ENCODE measurements at regions of chr12 and their contacts with region 1.

Region 1: DNA sequence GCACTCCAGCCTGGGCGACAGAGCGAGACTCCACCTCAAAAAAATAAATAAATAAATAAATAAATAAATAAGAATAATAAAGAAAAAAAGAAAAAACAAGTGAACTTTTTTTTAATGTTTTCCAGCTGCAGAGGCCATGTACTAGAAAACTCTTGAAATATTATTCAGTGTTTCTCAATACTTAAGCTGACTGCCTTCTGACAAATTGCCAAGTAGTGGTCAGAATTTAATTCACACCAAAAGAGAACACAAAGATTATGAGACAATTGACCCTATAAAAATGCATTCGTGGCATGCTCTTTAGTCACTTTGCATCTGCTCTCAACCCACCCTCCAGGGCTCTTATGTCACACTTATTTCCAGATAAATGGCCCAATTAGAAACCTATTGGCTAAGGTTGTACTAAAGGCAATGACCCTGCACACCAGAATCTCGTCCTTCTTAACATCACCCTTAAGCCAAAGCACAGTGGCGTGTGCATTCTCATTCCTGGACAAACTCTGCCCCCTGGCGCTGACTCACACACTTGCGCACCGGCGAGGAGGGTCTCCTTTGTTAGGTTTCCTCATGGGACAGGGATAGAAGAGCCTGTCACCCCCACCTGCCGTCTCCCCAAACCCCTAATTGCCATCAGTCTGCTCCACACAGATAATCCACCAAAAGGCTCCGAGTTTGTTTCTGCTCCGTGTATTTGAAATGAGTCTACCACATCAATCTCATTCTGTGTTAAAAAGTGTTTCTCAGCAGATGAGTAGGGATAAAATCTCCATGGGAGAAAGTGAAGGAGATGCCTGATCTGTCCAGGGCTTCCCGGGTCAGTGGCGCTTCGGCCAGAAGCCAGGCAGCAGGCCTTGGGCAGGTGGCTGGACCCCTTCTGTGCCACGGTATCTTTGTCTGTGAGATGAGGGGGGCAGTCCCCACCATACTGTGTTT is 73.1 kb upstream of the CEP83 start:
- DNase-seq: peak; percentile 56
- ATAC-seq: peak; percentile 95
- H3K4me3 ChIP-seq: no peak overlapping the region
- H3K27ac ChIP-seq: no peak overlapping the region
- H3K4me1 ChIP-seq: no peaks in the 10 kb centered on the region
- H3K27me3 ChIP-seq: peaks cover 20% of the 10 kb centered on the region
- CTCF ChIP-seq: peak; percentile 81
- POLR2A ChIP-seq: no peak
- RAD21 ChIP-seq: peak; percentile 93

Region 2: DNA sequence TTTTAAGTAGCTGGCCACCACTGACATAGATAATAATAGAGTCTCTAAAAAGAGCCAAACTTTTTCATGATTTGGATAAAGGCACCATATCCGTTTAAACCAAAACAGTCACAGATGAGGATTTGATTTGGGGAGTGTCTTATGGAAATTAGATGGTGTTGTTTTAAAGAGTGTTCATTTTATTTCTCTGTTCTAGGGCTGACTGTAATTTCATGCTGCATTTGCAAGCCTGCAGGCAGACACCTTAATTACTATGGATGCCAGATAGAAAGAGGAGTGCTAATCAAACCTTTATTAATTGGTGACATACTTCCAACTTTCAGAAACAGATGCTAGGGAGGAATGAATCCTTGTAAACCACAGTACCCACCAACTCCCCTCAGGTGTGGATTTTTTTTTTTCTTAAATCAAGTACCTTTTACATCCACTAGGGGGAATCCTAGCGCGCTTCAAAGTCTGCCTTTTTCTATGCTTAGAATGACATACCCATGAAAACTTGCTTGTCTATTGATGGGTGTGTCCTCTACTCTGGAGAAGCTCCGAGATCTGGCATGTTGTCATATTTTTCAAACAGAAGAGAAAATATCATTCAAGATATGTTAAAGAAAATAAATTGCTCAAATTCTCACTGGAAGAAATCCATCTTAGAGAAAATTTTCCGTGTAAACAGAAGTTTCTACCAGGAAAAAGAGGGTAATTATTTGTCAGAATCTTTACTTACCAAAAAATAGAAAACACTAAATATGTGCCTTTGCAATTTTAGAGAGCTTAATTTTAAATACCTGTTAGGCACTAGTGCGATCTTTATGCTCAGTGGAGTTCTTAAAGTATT is 398.6 kb before region 1 on chr12:
- CTCF ChIA-PET with region 1: interaction called, 6 read pairs
- POLR2A ChIA-PET with region 1: no interaction called
- dilution Hi-C with region 1: loop called (anchors 25 kb)
- in situ Hi-C with region 1: no loop called
- intact Hi-C with region 1: loop called (anchors 1 kb)
- DNase-seq: peak; percentile 62
- ATAC-seq: peak; percentile 87
- H3K4me3 ChIP-seq: no peak overlapping the region
- H3K27ac ChIP-seq: no peak overlapping the region
- H3K4me1 ChIP-seq: no peaks in the 10 kb centered on the region
- H3K27me3 ChIP-seq: peaks cover 20% of the 10 kb centered on the region
- CTCF ChIP-seq: peak; percentile 78
- POLR2A ChIP-seq: no peak
- RAD21 ChIP-seq: peak; percentile 81

Region 3: DNA sequence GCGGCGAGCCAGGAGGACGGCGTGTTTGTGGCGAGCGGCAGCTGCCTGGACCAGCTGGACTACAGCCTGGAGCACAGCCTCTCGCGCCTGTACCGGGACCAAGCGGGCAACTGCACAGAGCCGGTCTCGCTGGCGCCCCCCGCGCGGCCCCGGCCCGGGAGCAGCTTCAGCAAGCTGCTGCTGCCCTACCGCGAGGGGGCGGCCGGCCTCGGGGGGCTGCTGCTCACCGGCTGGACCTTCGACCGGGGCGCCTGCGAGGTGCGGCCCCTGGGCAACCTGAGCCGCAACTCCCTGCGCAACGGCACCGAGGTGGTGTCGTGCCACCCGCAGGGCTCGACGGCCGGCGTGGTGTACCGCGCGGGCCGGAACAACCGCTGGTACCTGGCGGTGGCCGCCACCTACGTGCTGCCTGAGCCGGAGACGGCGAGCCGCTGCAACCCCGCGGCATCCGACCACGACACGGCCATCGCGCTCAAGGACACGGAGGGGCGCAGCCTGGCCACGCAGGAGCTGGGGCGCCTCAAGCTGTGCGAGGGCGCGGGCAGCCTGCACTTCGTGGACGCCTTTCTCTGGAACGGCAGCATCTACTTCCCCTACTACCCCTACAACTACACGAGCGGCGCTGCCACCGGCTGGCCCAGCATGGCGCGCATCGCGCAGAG is 383.5 kb before region 1 on chr12:
- CTCF ChIA-PET with region 1: interaction called, 4 read pairs
- POLR2A ChIA-PET with region 1: no interaction called
- dilution Hi-C with region 1: loop called (anchors 25 kb)
- in situ Hi-C with region 1: loop called (anchors 5 kb)
- intact Hi-C with region 1: loop called (anchors 1 kb)
- DNase-seq: peak; percentile 23
- ATAC-seq: peak; percentile 64
- H3K4me3 ChIP-seq: peak overlapping the region; percentile 67
- H3K27ac ChIP-seq: no peak overlapping the region
- H3K4me1 ChIP-seq: no peaks in the 10 kb centered on the region; the same call in none of the 2 replicates
- H3K27me3 ChIP-seq: peaks cover 88% of the 10 kb centered on the region
- CTCF ChIP-seq: 0 out of 2 replicates have a peak, but pooled peaks have one; percentile 18
- POLR2A ChIP-seq: no peak
- RAD21 ChIP-seq: no peak

Region 4: DNA sequence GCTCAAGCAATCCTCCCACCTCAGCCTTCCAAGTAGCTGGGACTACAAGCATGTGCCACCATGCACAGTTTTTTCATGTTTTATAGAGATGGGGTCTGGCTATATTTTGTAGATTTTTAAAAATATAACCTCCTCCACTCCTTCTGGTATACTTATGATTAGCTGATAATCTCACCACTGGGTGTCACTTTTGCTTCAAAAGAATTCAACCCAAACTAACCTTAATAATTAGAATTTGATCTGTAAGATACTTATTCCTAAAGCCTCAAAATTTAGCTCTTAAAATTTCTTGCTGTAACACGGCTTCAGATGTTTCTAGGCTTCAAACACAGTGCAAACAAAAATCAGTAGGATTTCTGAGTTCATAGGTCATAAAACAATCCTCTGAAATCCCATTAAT is 203.4 kb before region 1 on chr12:
- CTCF ChIA-PET with region 1: no interaction called
- POLR2A ChIA-PET with region 1: no interaction called
- dilution Hi-C with region 1: no loop called
- in situ Hi-C with region 1: no loop called
- intact Hi-C with region 1: loop called (anchors 2 kb)
- DNase-seq: no peak
- ATAC-seq: no peak
- H3K4me3 ChIP-seq: no peak overlapping the region
- H3K27ac ChIP-seq: no peak overlapping the region
- H3K4me1 ChIP-seq: no peaks in the 10 kb centered on the region
- H3K27me3 ChIP-seq: no peaks in the 10 kb centered on the region
- CTCF ChIP-seq: no peak
- POLR2A ChIP-seq: no peak
- RAD21 ChIP-seq: no peak

Region 5: DNA sequence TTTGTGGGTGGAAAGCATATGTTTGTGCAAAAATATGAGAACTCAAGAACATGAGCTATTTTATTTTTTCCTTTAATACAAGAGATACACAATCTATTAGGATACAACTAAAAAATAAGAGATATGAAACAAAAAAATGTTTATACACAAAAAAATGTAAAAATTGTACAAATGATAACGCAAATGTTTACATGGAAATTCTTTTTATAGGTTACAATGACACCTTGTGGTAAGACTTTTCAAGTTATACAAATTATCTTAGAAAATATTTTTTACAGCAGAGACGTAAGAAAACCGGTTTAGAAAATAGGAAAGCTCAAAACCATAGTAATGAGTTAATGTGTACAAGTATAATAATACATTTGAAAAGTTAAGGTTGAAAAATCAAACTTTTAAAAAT is 98.6 kb before region 1 on chr12:
- CTCF ChIA-PET with region 1: interaction called, 3 read pairs
- POLR2A ChIA-PET with region 1: no interaction called
- dilution Hi-C with region 1: no loop called
- in situ Hi-C with region 1: no loop called
- intact Hi-C with region 1: loop called (anchors 5 kb)
- DNase-seq: peak; percentile 11
- ATAC-seq: no peak
- H3K4me3 ChIP-seq: no peak overlapping the region
- H3K27ac ChIP-seq: no peak overlapping the region
- H3K4me1 ChIP-seq: no peaks in the 10 kb centered on the region
- H3K27me3 ChIP-seq: no peaks in the 10 kb centered on the region
- CTCF ChIP-seq: peak; percentile 31
- POLR2A ChIP-seq: no peak
- RAD21 ChIP-seq: peak; percentile 41

Region 6: GRCh38 chr12:94459728-94460615 is 72.8 kb before region 1 on chr12 and contains the start of gene CEP83:
- CTCF ChIA-PET with region 1: no interaction called
- POLR2A ChIA-PET with region 1: no interaction called
- dilution Hi-C with region 1: no loop called
- in situ Hi-C with region 1: no loop called
- intact Hi-C with region 1: loop called (anchors 5 kb)
- DNase-seq: peak; percentile 90
- ATAC-seq: peak; percentile 99
- H3K4me3 ChIP-seq: peak within 1 kb of the TSS; percentile 73
- H3K27ac ChIP-seq: peak within 1 kb of the TSS; percentile 77
- H3K4me1 ChIP-seq: no peaks in the 10 kb centered on the region
- H3K27me3 ChIP-seq: no peaks in the 10 kb centered on the region
- CTCF ChIP-seq: no peak
- POLR2A ChIP-seq: peak; percentile 76
- RAD21 ChIP-seq: no peak
- total RNA-seq, gene CEP83: 3.9 and 8.9 TPM in 2 replicates

Measured in IMR-90 (cell line).